ENCODE measurements at regions of chr16 and their contacts with region 1.

Region 1: DNA sequence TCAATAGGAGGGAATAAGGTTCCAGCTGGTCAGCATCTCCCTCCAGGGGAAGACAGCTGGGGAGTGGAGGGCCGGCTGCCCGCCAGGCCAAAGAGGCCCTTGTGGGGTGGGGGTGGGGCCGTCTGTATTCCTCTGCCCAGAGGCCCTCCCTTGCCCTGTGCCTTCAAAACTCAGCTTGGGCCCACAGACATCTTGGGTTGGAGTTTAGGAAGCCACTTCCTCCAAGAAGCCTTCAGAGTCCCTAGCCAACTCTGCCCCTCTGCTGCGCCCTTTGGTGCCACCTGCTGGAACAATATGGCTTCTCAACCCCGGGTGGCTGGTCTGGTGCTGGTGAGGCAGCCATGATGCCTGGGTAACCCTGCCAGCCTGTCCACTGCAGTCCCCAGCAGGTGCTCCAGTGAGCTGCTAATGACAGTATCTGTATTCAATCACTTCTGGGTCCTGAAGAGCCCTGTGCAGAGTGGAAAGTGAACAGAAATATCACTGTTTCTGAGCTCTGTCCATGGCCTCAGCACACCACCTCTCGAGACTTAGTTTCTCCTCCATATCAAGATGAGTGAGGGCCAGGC is 16.7 kb downstream of the HSD11B2 start:
- DNase-seq: peak; percentile 62
- ATAC-seq: no peak; the same call in 1 of the 2 replicates
- H3K4me3 Mint-ChIP-seq: no peak overlapping the region
- H3K27ac Mint-ChIP-seq: no peak overlapping the region
- H3K4me1 Mint-ChIP-seq: peaks cover 6% of the 10 kb centered on the region
- H3K27me3 Mint-ChIP-seq: no peaks in the 10 kb centered on the region; the same call in 1 of the 2 replicates
- CTCF ChIP-seq: 0 out of 2 replicates have a peak, but pooled peaks have one; percentile 16

Region 2: GRCh38 chr16:67183627-67184328 is 263.8 kb before region 1 on chr16 and contains the start of gene MATCAP1:
- CTCF ChIA-PET with region 1: no interaction called
- POLR2A ChIA-PET with region 1: no interaction called
- DNase-seq: peak; percentile 94
- ATAC-seq: peak; percentile 90
- H3K4me3 Mint-ChIP-seq: peak within 1 kb of the TSS; percentile 82
- H3K27ac Mint-ChIP-seq: no peak within 1 kb of the TSS
- H3K4me1 Mint-ChIP-seq: peaks cover 20% of the 10 kb centered on the region
- H3K27me3 Mint-ChIP-seq: peaks cover 31% of the 10 kb centered on the region
- CTCF ChIP-seq: no peak
- total RNA-seq, gene MATCAP1: 40.8 to 54.3 TPM (median 50.5 TPM) in 3 replicates

Region 3: DNA sequence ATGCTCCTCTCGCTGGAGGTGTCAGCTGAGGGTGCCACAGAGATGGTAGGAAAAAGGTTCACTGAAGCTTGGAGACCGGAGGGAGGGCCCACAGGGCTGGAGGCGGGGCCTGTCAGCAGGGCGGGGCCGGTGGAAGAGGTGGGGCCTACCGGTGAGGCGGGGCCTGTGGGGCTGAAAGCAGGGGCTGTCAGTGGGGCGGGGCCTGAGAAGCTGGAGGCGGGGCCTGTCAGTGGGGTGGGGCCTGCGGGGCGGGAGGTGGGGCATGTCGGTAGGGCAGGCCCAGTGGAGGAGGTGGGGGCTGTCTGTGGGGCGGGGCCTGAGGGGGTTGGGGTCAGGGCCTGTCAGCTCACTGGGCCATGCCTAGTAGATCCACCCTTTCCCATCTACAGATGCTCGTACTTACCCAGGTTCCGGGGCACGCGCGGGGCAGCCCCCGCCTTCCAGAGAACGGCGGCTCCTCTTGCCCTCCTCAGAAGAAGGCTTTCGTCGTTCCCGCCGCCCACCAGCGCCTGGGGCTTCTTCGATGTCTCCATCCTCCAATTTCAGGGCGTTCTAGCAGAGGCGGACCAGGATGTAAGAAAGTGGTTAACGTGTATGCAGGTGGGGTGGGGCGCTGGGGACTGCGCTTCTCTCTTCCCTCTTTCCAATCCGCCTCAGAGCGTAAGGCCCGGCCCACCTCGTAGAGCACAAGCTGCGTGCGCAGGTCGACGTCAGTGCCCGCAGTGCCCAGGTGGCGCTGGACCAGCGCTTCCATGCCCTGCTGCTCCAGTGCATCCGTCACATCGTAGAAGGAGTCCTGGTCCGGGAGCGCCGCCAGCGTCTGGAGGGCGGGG is 210.8 kb before region 1 on chr16:
- CTCF ChIA-PET with region 1: no interaction called
- POLR2A ChIA-PET with region 1: no interaction called
- DNase-seq: peak; percentile 96
- ATAC-seq: peak; percentile 93
- H3K4me3 Mint-ChIP-seq: peak overlapping the region; percentile 43; the same call in 1 of the 2 replicates
- H3K27ac Mint-ChIP-seq: peak overlapping the region; percentile 80
- H3K4me1 Mint-ChIP-seq: peaks cover 17% of the 10 kb centered on the region
- H3K27me3 Mint-ChIP-seq: no peaks in the 10 kb centered on the region
- CTCF ChIP-seq: no peak

Region 4: DNA sequence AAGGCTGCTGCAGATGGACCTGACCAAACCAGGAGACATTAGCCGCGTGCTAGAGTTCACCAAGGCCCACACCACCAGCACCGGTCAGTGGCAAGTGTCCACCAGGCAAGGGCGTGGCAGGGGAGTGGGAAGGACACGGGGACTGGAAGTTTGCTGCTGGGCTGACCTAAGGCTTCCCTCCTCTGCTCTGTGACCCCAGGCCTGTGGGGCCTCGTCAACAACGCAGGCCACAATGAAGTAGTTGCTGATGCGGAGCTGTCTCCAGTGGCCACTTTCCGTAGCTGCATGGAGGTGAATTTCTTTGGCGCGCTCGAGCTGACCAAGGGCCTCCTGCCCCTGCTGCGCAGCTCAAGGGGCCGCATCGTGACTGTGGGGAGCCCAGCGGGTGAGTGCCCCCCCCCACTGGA is 11.8 kb before region 1 on chr16:
- CTCF ChIA-PET with region 1: interaction called, 57 read pairs
- POLR2A ChIA-PET with region 1: interaction called, 5 read pairs
- DNase-seq: no peak
- ATAC-seq: no peak
- H3K4me3 Mint-ChIP-seq: no peak overlapping the region
- H3K27ac Mint-ChIP-seq: no peak overlapping the region
- H3K4me1 Mint-ChIP-seq: peaks cover 25% of the 10 kb centered on the region
- H3K27me3 Mint-ChIP-seq: no peaks in the 10 kb centered on the region
- CTCF ChIP-seq: no peak

Region 5: GRCh38 chr16:67470359-67470758 is 22.8 kb after region 1 on chr16:
- CTCF ChIA-PET with region 1: interaction called, 42 read pairs
- POLR2A ChIA-PET with region 1: no interaction called
- DNase-seq: no peak
- ATAC-seq: no peak
- H3K4me3 Mint-ChIP-seq: no peak overlapping the region
- H3K27ac Mint-ChIP-seq: no peak overlapping the region
- H3K4me1 Mint-ChIP-seq: peaks cover 3% of the 10 kb centered on the region
- H3K27me3 Mint-ChIP-seq: no peaks in the 10 kb centered on the region; the same call in 1 of the 2 replicates
- CTCF ChIP-seq: no peak

Measured in WTC11 (cell line).